K562 (cell line): ENCODE measurements at regions of chr9 and their contacts with region 1.

Region 1: DNA sequence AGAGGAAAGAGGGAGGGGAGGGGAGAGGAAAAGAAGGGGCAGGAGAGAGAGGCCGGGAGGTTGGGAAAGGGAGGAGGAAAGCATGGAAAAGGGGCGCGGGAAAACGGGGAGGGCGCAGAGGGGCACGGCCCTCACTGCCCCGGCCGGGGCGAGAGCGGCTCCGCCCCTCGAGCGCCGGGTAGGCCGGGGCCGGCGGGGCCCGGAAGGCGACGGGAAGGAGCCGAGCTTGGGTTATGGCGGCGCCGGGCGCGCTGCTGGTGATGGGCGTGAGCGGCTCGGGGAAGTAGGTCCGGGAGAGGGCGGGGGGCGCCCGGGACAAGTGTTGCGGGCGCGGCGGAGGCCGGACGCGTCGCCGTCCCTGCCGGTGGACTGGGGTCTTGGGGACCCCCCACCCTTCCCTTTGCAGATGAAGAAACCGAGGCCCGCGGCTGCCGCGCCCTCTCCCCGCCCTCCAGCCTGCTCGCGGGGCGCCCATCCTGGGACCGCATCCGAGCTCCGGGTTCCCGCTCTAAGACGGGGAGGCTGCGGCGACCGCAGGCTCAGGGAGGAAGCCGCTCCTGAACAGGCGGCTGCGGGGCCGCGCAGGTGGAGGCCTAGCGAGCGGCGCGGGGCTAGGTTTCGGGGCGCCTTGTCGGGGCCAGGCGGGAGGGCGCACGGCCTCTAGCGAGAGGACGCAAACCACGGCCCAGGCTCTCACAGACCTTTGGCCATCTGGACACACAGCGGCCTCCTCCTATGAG is at the start of gene IDNK:
- DNase-seq: peak; percentile 47 to 81 (median 67)
- ATAC-seq: peak; percentile 90
- H3K4me3 ChIP-seq: peak within 1 kb of the TSS; percentile 65
- H3K27ac ChIP-seq: peak within 1 kb of the TSS; percentile 72
- H3K4me1 ChIP-seq: peaks cover 11 to 14% of the 10 kb centered on the region in 2 experiments; a peak in 3 of 5 replicates
- H3K27me3 ChIP-seq: no peaks in the 10 kb centered on the region
- CTCF ChIP-seq: no peak
- EP300 ChIP-seq: no peak
- POLR2A ChIP-seq: peak; percentile 77
- RAD21 ChIP-seq: no peak
- polyA plus RNA-seq, gene IDNK: 0.50 to 0.62 TPM

Region 2: DNA sequence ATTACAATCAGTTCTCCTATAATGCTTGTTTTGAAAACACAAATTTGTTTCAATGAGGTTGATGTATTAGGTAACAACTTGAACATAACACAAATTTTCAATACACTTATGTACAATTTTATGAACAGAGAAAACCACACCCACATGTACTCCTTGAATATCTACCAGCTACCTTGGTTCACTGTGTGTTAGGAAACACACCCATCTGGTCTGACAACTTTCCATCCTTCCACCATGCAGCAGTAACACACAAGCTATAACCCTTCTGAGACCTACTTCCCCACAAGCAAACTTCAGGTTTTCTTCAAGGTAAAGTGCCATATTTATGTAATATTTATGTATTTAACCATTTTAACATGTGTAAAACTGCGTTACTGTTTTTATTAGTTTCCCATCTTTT is 121.1 kb after region 1 on chr9:
- CTCF ChIA-PET with region 1: no interaction called
- POLR2A ChIA-PET with region 1: no interaction called
- in situ Hi-C with region 1: no loop called
- intact Hi-C with region 1: no loop called
- DNase-seq: no peak
- ATAC-seq: no peak
- H3K4me3 ChIP-seq: no peak overlapping the region
- H3K27ac ChIP-seq: no peak overlapping the region
- H3K4me1 ChIP-seq: no peaks in the 10 kb centered on the region
- H3K27me3 ChIP-seq: no peaks in the 10 kb centered on the region
- CTCF ChIP-seq: no peak
- EP300 ChIP-seq: no peak
- POLR2A ChIP-seq: no peak
- RAD21 ChIP-seq: no peak

Region 3: GRCh38 chr9:83920927-83921707 is 298.0 kb after region 1 on chr9 and contains the start of gene KIF27:
- CTCF ChIA-PET with region 1: no interaction called
- POLR2A ChIA-PET with region 1: no interaction called
- in situ Hi-C with region 1: loop called (anchors 25 kb)
- intact Hi-C with region 1: no loop called
- DNase-seq: peak; percentile 89 to 95 (median 90)
- ATAC-seq: peak; percentile 97
- H3K4me3 ChIP-seq: peak within 1 kb of the TSS; percentile 61
- H3K27ac ChIP-seq: peak within 1 kb of the TSS; percentile 81; the same call in 2 of the 3 replicates
- H3K4me1 ChIP-seq: peaks cover 0 to 6% of the 10 kb centered on the region in 2 experiments; a peak in 3 of 5 replicates
- H3K27me3 ChIP-seq: no peaks in the 10 kb centered on the region
- CTCF ChIP-seq: peak; percentile 9 to 62 (median 31); a peak in 3 of 6 replicates
- EP300 ChIP-seq: no peak
- POLR2A ChIP-seq: peak; percentile 65
- RAD21 ChIP-seq: no peak
- polyA plus RNA-seq, gene KIF27: 0.32 to 0.50 TPM